GM10248 (cell line): ENCODE measurements at regions of chr20 and their contacts with region 1.

Region 1: DNA sequence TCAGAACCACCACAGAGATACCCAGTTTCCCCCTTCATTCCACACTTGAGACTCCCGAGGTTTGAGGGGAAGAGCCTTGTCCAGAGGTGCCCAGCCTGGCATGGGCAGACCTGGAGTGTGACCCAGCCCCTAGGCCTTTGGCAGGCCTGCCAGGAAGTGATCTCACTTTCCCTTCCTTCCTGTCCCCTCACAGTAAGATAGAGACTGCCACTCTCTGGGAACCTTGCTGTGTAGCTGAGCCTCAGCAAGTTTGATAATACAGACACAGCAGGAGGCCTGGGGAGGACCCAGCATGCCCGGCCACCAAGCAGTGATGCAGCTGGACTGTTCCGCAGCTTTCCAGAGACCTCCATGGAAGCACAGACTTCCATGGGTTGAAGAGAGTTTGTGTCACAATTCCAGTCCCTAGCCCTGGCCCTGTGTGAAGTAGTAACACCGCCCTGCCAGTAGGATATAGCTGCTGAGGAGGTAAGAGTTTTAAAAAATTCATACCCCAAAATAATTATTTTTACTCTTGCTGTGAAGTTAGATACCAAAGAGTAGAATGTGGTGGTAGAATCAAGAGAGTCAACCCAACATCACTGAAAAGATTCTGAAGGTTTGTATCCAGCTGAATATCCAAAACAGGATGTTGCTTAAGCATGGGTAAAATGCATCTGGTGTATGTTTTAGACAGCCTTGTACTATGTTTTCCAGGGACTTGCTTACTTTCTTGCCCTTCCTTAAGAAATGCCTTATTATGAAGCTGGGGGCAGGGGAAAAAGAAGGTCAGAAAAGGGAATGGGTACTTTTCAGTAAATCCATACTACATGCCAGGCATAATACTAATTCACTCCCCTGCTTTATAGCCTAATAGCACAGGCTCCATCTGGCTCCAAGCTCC is 16.3 kb downstream of the PKIG start:
- DNase-seq: no peak
- CTCF ChIP-seq: peak; percentile 14

Region 2: DNA sequence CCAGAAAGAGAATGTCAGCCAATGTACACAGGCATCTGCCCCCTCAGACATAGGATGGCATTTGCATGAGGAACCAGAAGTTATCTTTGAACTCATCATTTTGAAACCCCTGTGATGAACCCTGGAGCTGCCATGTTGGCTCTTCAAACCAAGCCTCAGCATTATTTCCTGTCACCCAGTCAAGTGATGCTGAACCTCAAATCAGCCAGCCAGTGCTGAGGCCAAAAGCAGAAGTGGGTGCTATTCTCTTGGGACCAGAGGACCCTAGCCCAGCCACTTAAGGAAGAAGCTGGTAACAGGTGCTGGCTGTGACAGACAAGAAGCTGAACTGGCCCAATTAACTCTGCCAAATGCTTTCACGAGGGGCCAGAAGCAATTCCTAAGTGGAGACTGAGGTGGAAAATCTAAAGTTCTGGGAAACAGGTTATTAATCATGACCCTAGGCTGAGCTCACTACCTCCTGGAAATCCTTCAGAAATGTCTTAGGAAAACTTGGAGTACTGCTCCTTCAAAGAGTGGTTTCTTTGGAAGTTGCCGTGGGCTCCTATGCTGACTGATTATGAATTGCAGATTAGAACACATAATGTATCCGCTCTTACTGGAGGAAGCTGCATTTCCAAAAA is 12.3 kb before region 1 on chr20:
- CTCF ChIA-PET with region 1: interaction called, 20 read pairs
- POLR2A ChIA-PET with region 1: interaction called, 4 read pairs
- DNase-seq: peak; percentile 57
- CTCF ChIP-seq: no peak

Region 3: DNA sequence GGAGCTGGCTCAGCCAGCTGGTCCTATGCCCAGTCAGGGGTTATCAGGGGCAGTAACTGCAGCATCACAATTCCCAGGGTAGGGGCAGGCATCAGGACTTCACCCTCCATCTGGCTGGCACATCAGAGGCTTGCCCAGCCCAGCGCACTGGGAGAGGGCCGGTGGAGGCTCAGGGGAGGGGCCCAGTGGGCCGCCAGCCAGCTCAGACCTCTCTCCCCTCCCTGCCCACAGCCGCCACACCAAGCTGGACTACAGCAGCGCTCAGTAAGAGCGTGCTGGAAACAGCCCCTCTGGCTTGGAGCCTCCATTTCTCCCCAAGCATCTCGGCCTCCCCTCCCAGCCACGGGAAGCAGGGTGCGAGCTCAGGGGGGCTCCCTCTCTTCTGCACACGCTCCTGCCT is 30.9 kb after region 1 on chr20:
- CTCF ChIA-PET with region 1: no interaction called
- POLR2A ChIA-PET with region 1: no interaction called
- DNase-seq: no peak
- CTCF ChIP-seq: no peak

Region 4: GRCh38 chr20:44714696-44715482 is 116.2 kb after region 1 on chr20 and contains the start of gene CCN5:
- CTCF ChIA-PET with region 1: no interaction called
- POLR2A ChIA-PET with region 1: no interaction called
- DNase-seq: no peak
- CTCF ChIP-seq: no peak